Adrenal gland (tissue), 19 donors: ENCODE measurements at regions of chr17 and their contacts with region 1.

Region 1: GRCh38 chr17:60231234-60231633 is 81.5 kb downstream of the CA4 start:
- DNase-seq: peak in 1 of 7 donors; percentile 18
- H3K4me3 ChIP-seq: no peak overlapping the region
- H3K27ac ChIP-seq: peak overlapping the region in 2 of 5 donors; percentile 40 to 76
- H3K4me1 ChIP-seq: peaks cover 3% of the 10 kb centered on the region in 2 donors
- H3K27me3 ChIP-seq: no peaks in the 10 kb centered on the region
- CTCF ChIP-seq: peak in 5 of 6 experiments; percentile 32 to 53 (median 51)
- POLR2A ChIP-seq: no peak

Region 2: DNA sequence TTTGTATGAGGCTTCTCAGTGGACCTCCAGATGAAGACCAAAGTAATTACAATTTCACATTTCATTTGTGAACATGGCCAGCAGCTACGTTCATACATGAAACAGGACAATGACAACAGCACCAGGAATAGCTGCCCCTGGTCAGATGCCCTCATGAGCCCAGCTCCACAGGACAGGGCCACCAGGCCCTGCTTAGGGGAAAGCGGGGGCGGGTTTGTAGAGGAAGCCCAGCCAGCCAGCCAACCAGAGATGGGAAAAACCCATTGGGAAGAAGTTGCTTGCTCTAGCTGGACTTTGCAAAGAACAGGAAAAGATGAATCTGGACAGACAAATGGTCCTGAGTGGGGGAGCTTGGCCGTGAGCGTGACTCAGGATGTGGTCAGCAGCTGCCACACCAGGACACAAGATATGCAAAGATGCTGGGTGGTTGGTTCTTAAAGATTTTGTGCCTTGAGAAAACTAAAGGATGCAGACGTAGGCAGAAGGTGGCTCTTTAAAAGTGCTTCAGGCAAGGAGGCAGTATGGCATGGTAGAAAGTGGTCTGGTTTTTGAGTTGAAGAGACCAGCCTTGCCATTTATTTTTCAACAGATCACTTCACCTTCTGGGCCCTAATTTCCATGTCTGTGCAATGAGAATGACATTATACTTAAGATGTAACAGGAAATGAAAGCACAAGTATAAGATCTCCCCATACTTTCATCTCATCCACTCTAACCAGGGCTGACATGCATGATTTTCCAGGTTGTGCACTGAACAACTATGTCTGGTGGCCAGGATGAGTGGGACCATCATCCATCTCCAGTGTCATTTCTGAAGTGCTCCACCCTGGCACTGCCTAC is 124.8 kb before region 1 on chr17:
- intact Hi-C with region 1: no loop called
- DNase-seq: no peak
- H3K4me3 ChIP-seq: no peak overlapping the region
- H3K27ac ChIP-seq: no peak overlapping the region
- H3K4me1 ChIP-seq: peaks cover 0 to 2% of the 10 kb centered on the region in 2 donors
- H3K27me3 ChIP-seq: no peaks in the 10 kb centered on the region
- CTCF ChIP-seq: no peak
- POLR2A ChIP-seq: no peak

Region 3: DNA sequence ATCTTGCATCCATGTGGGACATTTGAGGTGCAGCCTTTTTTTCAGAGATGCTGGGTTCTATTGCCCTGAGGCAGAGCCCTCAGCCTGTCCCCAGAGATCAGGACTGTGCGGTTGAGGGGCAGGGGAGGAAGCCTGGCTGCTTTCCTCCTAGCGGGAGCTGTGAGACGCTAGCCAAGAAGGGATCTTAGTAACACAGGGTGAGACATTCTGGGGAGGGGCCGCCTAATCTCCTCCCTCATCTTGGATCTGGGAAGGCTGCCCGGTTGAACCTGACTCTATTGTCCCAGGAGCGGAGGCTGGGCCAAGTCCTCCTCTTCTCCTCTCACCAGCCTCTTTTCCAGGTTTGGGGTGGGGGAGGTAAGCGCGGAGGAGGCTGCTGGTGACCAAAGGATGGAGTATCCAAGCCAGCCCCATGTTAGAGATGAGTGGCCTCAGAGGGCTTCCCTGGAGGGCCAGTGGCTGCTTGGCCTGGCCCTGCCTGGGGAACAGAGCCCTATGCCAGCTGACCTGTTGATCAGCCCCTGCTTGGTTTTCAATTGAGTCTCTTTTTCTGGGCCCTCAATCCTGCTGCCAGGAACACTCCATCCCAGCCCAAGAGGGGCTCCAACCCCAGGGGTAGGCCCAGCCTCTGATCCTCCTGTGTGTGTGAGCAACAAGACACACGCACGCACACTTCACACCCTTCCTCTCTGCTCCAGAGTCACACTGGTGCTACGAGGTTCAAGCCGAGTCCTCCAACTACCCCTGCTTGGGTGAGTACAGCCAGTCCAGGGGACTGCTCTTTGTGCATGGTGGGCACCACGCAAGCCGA is 76.4 kb before region 1 on chr17:
- intact Hi-C with region 1: loop called in 1 of 2 experiments (anchors 10 kb)
- DNase-seq: peak in 1 of 7 donors; percentile 28
- H3K4me3 ChIP-seq: no peak overlapping the region
- H3K27ac ChIP-seq: no peak overlapping the region
- H3K4me1 ChIP-seq: peaks cover 10% of the 10 kb centered on the region in 2 donors
- H3K27me3 ChIP-seq: peaks cover 18% of the 10 kb centered on the region
- CTCF ChIP-seq: no peak
- POLR2A ChIP-seq: no peak

Region 4: DNA sequence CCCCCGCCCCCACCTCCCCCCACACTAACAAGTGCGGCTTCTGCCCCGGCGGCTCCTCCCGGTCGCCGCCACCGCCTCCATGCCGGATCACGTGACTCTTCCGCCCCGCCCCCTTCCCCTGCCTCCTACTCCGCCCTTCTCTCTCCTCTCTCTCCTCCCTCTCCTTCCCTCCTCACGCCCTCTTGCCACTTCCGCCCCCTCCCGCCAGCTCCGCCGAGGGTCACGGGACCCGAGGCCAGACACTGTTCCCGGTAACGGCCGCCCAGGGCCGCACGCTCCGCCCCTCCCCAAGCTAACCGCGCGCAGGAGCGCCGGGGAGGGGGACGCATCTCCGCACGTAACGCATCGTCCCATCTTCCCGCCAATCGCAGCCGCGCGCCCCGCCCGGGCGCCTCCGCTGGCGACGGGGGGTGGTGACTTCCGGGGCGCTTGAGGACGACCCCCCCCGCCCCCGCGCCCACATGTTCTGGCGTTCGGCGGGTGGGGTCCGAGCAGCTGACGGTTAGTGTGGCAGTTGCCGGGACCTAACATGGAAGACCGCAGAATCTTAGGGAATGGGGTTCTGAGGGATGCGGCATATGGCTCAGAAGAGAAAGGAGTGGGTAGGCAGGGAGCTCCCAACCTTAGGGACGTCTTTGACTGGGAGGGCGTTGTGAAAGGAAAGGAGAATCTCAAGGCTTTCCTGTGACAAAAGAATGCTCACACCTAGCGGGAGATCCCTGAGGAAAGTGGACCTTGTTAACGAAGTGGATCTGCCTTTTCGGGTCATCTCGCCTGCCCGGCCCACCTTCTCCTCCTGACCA is 161.0 kb after region 1 on chr17 and contains the start of gene USP32:
- intact Hi-C with region 1: loop called in 1 of 2 experiments (anchors 10 kb)
- DNase-seq: peak; percentile 97 to 100 (median 99)
- H3K4me3 ChIP-seq: peak within 1 kb of the TSS; percentile 72 to 86 (median 76)
- H3K27ac ChIP-seq: peak within 1 kb of the TSS; percentile 85 to 97 (median 93)
- H3K4me1 ChIP-seq: peaks cover 0 to 28% of the 10 kb centered on the region in 2 donors
- H3K27me3 ChIP-seq: no peaks in the 10 kb centered on the region
- CTCF ChIP-seq: peak in 5 of 6 experiments; percentile 10 to 41 (median 22)
- POLR2A ChIP-seq: peak; percentile 60 to 71
- total RNA-seq, gene USP32: 36.2 to 99.3 (median 58.0) TPM

Region 5: GRCh38 chr17:60421273-60421934 is 190.2 kb after region 1 on chr17:
- intact Hi-C with region 1: loop called in 1 of 2 experiments (anchors 10 kb)
- DNase-seq: peak; percentile 60 to 76 (median 75)
- H3K4me3 ChIP-seq: peak overlapping the region in 3 of 4 donors; percentile 7 to 61 (median 33)
- H3K27ac ChIP-seq: peak overlapping the region in 2 of 5 donors; percentile 45 to 47
- H3K4me1 ChIP-seq: peaks cover 0 to 8% of the 10 kb centered on the region in 2 donors
- H3K27me3 ChIP-seq: no peaks in the 10 kb centered on the region
- CTCF ChIP-seq: peak; percentile 77 to 98 (median 91)
- POLR2A ChIP-seq: peak in 1 of 2 donors; percentile 11

Region 6: DNA sequence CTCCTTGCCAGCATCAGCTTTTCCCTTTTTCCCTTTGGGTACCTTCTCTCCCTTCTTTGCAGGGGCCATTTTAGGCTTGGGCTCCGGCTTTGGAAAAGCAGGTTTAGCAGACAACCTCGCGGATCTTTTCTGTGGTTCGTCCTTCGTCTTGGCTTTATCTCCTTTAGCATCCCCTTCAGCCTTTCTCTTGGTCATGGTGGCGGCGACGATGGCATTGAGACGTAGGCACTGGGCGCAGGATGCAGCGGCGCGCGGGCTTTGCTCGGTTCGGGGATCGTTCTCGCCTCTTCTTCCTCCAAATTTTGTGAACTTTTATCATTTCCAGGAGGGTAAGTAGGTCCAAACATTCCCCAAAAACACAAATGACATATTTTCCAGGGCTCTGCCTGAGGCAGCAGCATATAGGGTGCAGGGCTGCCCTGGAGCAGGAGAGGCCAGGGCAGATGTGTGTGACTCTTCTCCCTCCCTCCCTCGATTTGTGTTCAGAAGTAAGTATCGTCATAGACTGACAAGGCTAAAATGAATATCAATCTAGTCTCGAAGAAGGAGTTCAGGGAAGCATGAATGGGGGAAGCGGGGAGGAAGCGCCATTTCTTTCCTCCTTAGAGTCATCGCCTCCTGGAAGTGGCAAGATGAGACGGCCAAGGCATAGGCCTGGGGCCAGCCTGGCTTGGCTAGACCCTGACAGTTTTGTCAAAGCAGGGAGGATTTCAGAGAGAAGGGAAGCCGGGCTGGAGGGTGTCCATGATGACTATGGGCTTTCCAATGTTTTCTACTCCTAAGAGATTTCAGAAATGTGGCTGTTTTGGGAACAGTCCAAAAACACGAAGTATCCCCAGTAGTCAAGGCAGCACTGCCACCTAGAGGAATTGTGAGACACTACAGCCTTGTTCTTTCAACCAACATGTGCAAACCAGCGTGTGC is 204.3 kb after region 1 on chr17:
- intact Hi-C with region 1: loop called in 1 of 2 experiments (anchors 5 kb)
- DNase-seq: peak; percentile 74 to 91 (median 79)
- H3K4me3 ChIP-seq: no peak overlapping the region
- H3K27ac ChIP-seq: no peak overlapping the region
- H3K4me1 ChIP-seq: peaks cover 0 to 4% of the 10 kb centered on the region in 2 donors
- H3K27me3 ChIP-seq: no peaks in the 10 kb centered on the region
- CTCF ChIP-seq: peak; percentile 89 to 99 (median 97)
- POLR2A ChIP-seq: no peak